Natural killer cell (primary cell): ENCODE measurements at regions of chr10 and their contacts with region 1.

Region 1: DNA sequence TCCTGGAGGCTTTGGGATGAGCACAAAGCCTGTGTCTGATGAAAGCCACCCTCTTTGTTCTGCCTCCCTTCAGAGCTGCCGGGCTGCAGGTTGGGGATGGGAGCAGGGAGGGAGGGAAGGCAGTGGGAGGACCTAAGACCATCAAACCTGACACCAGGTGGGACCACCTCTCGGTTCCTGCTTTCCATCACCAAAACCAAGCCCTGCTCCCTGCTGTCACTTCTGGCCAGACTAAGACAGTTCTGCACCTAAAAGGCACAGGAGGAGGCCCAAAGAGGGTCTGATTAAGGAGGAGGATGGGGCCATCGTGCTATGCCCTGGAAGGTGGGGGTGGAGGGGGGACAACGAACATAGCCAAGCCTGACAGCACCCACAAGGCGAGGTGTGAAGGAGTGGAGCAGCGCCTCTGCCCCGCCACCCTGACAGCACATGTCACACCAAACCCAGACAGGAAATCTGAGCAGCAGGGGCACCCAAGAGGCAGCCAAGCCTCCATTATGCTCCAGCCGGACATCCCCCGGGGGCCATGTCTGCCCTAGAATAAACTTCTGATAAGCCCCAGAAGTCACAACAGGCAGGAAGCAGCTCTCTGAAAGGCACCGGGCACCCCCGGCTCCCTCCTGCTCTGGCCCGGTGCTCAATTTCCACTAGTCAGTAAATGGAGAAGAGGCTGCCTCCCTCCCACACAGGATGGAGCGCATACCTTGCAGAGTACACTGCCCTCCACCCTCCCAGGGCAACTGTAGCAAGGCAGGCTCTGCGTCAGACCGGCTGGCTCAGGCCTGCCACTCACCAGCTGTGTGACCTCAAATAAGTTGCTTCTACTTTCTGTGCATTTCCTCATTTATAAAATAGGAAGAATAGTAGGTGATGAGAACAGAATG is 48.9 kb downstream of the DLG5 start:
- DNase-seq: peak; percentile 74 to 81
- ATAC-seq: peak; percentile 74 to 92 (median 87)
- H3K4me3 ChIP-seq: peak overlapping the region; percentile 4
- H3K4me3 Mint-ChIP-seq: peak overlapping the region; percentile 74
- H3K27ac ChIP-seq: peak overlapping the region; percentile 92
- H3K27ac Mint-ChIP-seq: peak overlapping the region; percentile 98 to 99
- H3K4me1 ChIP-seq: peaks cover 73% of the 10 kb centered on the region
- H3K4me1 Mint-ChIP-seq: peaks cover 63 to 71% of the 10 kb centered on the region in 2 donors
- H3K27me3 ChIP-seq: no peaks in the 10 kb centered on the region
- H3K27me3 Mint-ChIP-seq: no peaks in the 10 kb centered on the region
- CTCF ChIP-seq: no peak

Region 2: GRCh38 chr10:75880031-75880775 is 1997.5 kb before region 1 on chr10:
- intact Hi-C with region 1: no loop called
- DNase-seq: no peak
- ATAC-seq: no peak
- H3K4me3 ChIP-seq: no peak overlapping the region
- H3K4me3 Mint-ChIP-seq: no peak overlapping the region
- H3K27ac ChIP-seq: no peak overlapping the region
- H3K27ac Mint-ChIP-seq: no peak overlapping the region
- H3K4me1 ChIP-seq: no peaks in the 10 kb centered on the region
- H3K4me1 Mint-ChIP-seq: no peaks in the 10 kb centered on the region
- H3K27me3 ChIP-seq: no peaks in the 10 kb centered on the region
- H3K27me3 Mint-ChIP-seq: no peaks in the 10 kb centered on the region
- CTCF ChIP-seq: no peak

Region 3: DNA sequence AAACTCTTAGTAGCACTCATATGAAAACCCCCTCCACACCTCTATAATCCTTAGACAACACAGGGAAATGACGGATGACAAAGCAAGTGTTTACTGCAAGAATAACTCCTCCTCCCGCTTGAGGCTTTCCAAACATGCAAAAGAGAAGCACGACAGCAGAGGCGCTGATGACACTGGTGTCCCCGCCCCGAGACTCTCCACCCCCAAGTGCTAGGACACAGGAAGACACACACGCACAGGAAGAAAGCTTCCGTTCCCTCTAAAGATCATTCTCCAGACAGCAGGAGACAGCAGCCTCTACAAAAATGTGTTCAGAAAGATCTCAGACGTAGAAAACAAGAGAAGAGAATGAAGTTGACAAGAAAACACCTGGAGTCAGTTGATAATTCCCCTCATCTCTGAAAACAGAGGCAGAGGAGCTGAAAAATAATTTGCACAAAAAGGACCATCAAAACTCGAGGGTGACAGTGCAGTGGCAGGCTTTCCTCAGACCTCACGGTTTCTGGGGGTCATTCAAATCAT is 41.3 kb before region 1 on chr10:
- intact Hi-C with region 1: loop called (anchors 1 kb)
- DNase-seq: peak; percentile 55 to 92
- ATAC-seq: peak; percentile 88 to 94 (median 91)
- H3K4me3 ChIP-seq: no peak overlapping the region
- H3K4me3 Mint-ChIP-seq: peak overlapping the region; percentile 65
- H3K27ac ChIP-seq: peak overlapping the region; percentile 75
- H3K27ac Mint-ChIP-seq: peak overlapping the region; percentile 91 to 93
- H3K4me1 ChIP-seq: peaks cover 39% of the 10 kb centered on the region
- H3K4me1 Mint-ChIP-seq: peaks cover 25 to 32% of the 10 kb centered on the region in 2 donors
- H3K27me3 ChIP-seq: no peaks in the 10 kb centered on the region
- H3K27me3 Mint-ChIP-seq: no peaks in the 10 kb centered on the region
- CTCF ChIP-seq: no peak

Region 4: DNA sequence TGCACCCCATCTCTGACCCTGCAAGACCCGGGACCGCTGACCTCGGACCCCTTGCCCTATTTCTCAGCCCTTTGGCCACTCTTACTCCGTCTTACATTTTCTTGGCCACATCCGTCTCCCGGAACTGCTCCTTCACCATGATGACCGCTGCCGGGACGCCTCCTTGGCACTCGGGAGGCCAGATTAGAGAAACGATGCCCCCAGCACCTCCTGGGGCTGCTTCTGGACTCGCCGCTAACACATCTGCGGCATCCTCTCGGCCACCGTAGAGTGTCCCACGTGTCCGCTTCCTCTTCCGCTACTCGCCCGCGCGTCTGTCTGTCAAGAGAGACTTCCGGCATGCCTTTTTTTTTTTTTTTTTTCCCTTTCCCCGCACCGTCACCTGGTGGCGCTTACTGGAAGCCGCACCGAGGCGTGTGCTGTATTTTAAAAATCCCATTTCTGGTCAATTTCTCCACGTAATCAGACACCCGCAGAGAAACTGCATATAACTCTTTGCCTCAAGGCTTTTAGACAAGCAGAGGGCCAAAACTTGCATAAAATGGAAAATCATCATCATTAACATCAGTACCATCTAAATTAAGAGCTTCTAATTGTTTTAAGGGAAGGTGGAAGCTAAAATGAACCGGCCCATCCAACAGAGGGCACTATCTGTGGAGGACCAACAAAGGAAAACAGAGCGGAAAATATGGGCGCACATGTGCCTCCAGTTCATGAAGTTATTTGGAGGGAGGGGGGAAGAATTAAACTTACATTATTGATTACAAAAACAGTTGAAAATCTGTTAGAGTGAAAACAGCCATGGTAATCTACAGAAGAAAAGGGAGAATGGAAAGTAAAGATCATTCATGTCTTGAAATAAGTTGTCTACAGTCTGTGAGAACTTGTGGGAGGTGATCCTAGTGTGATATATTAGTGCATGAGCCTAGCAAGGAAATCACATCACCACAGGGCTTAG is 151.8 kb after region 1 on chr10 and contains the start of gene POLR3A:
- intact Hi-C with region 1: loop called (anchors 2 kb)
- DNase-seq: peak; percentile 92 to 97
- ATAC-seq: peak; percentile 50 to 79 (median 69)
- H3K4me3 ChIP-seq: peak within 1 kb of the TSS; percentile 98
- H3K4me3 Mint-ChIP-seq: peak within 1 kb of the TSS; percentile 100
- H3K27ac ChIP-seq: peak within 1 kb of the TSS; percentile 69
- H3K27ac Mint-ChIP-seq: peak within 1 kb of the TSS; percentile 88 to 98
- H3K4me1 ChIP-seq: peaks cover 19% of the 10 kb centered on the region
- H3K4me1 Mint-ChIP-seq: peaks cover 38 to 39% of the 10 kb centered on the region in 2 donors
- H3K27me3 ChIP-seq: no peaks in the 10 kb centered on the region
- H3K27me3 Mint-ChIP-seq: no peaks in the 10 kb centered on the region
- CTCF ChIP-seq: peak; percentile 67
- total RNA-seq, gene POLR3A: 15.6 to 21.0 (median 17.9) TPM